Endothelial cell of umbilical vein (primary cell): ENCODE measurements at regions of chr22 and their contacts with region 1.

Region 1: GRCh38 chr22:30277547-30278344 is 11.1 kb upstream of the OSM start:
- DNase-seq: peak; percentile 89
- H3K4me3 ChIP-seq: no peak overlapping the region
- H3K27ac ChIP-seq: peak overlapping the region; percentile 47
- H3K4me1 ChIP-seq: peaks cover 16% of the 10 kb centered on the region
- H3K27me3 ChIP-seq: no peaks in the 10 kb centered on the region
- CTCF ChIP-seq: no peak
- POLR2A ChIP-seq: no peak

Region 2: DNA sequence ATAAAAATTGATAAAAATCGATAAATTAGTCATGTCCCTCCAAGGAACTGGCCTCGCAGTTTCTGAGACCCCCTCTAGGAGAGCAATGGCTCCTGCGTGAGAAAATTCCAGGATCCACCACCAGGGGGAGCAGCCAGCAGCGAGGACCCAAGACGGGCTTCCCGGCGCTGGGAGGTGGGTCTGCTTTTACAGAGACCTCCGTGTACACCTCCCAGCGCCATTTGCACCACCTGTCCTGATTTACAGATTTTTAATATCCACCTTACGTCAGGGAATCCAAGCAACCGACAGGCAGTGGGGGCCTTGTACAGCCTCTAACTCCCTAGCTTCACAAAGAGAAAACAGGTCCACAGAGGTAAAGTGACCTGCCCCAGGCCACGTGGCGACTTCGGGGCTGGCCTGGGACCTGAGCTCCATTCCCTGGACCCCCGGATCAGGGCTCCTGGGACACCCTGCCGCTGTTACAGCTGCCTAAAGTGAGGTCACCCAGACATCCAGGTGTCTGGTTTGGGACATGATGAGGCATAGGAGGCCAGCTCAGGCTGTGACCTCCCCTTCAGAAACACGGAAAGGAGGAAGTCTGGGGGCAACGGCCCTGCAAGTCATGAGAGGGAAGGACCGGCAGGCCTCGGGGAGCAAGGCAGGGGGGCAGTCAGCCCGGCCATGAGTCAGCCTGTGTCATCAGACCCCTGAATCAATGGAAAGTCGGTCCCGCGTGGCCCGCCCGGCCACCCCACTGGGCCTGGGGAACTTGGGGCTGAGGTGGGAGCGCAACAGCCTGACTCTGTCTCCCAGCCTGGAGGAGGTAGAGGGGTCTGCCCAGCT is 14.6 kb before region 1 on chr22:
- CTCF ChIA-PET with region 1: interaction called, 37 read pairs
- POLR2A ChIA-PET with region 1: no interaction called
- dilution Hi-C with region 1: no loop called
- intact Hi-C with region 1: no loop called
- DNase-seq: peak; percentile 57
- H3K4me3 ChIP-seq: no peak overlapping the region
- H3K27ac ChIP-seq: no peak overlapping the region
- H3K4me1 ChIP-seq: peaks cover 6% of the 10 kb centered on the region
- H3K27me3 ChIP-seq: no peaks in the 10 kb centered on the region
- CTCF ChIP-seq: peak; percentile 82 to 93
- POLR2A ChIP-seq: no peak